Prostate gland (tissue), 2 donors: ENCODE measurements at regions of chr7 and their contacts with region 1.

Region 1: DNA sequence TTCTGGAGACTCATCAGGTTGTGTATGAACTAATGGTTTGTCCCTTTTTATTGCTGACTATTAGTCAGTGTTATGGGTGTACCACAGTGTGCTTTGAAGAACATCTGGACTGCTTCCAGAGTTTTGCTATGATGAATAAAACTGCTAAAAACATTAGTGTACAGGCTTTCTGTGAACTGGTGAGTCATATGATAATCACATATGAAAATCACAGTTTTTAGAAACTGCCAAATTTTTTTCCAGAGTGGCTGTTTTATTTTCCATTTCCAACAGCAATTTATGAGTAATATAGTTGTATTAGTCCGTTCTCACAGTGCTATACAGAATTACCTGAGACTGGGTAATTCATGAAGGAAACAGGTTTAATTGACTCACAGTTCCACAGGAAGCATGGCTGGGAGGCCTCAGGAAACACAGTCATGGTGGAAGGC is 281.2 kb upstream of the VSTM2A start:
- DNase-seq: no peak
- H3K4me3 ChIP-seq: no peak overlapping the region
- H3K27ac ChIP-seq: no peak overlapping the region
- H3K4me1 ChIP-seq: no peaks in the 10 kb centered on the region
- H3K27me3 ChIP-seq: no peaks in the 10 kb centered on the region
- CTCF ChIP-seq: no peak
- POLR2A ChIP-seq: no peak

Region 2: GRCh38 chr7:53209129-53209528 is 1051.8 kb before region 1 on chr7:
- intact Hi-C with region 1: loop called (anchors 10 kb)
- DNase-seq: no peak
- H3K4me3 ChIP-seq: no peak overlapping the region
- H3K27ac ChIP-seq: no peak overlapping the region
- H3K4me1 ChIP-seq: no peaks in the 10 kb centered on the region
- H3K27me3 ChIP-seq: no peaks in the 10 kb centered on the region
- CTCF ChIP-seq: no peak
- POLR2A ChIP-seq: no peak